CD4-positive, alpha-beta memory T cell (primary cell): ENCODE measurements at regions of chr19 and their contacts with region 1.

Region 1: GRCh38 chr19:2900296-2901252 is at the start of gene ZNF57:
- DNase-seq: peak; percentile 92 to 98 (median 97)
- H3K4me3 ChIP-seq: peak within 1 kb of the TSS; percentile 52 to 90
- H3K4me3 Mint-ChIP-seq: peak within 1 kb of the TSS; percentile 93 to 100 (median 96)
- H3K27ac ChIP-seq: peak within 1 kb of the TSS; percentile 47
- H3K27ac Mint-ChIP-seq: peak within 1 kb of the TSS; percentile 81 to 94 (median 92)
- H3K4me1 ChIP-seq: peaks cover 15% of the 10 kb centered on the region
- H3K4me1 Mint-ChIP-seq: peaks cover 15 to 29% (median 20%) of the 10 kb centered on the region in 4 donors
- H3K27me3 ChIP-seq: no peaks in the 10 kb centered on the region
- H3K27me3 Mint-ChIP-seq: no peaks in the 10 kb centered on the region
- total RNA-seq, gene ZNF57: 4.2 to 4.7 TPM

Region 2: GRCh38 chr19:2691951-2692350 is 208.6 kb before region 1 on chr19:
- CTCF ChIA-PET with region 1: no interaction called
- POLR2A ChIA-PET with region 1: no interaction called
- intact Hi-C with region 1: no loop called
- DNase-seq: no peak
- H3K4me3 ChIP-seq: no peak overlapping the region
- H3K4me3 Mint-ChIP-seq: no peak overlapping the region
- H3K27ac ChIP-seq: no peak overlapping the region
- H3K27ac Mint-ChIP-seq: no peak overlapping the region
- H3K4me1 ChIP-seq: no peaks in the 10 kb centered on the region
- H3K4me1 Mint-ChIP-seq: peaks cover 0 to 6% (median 0%) of the 10 kb centered on the region in 4 donors
- H3K27me3 ChIP-seq: no peaks in the 10 kb centered on the region
- H3K27me3 Mint-ChIP-seq: no peaks in the 10 kb centered on the region

Region 3: DNA sequence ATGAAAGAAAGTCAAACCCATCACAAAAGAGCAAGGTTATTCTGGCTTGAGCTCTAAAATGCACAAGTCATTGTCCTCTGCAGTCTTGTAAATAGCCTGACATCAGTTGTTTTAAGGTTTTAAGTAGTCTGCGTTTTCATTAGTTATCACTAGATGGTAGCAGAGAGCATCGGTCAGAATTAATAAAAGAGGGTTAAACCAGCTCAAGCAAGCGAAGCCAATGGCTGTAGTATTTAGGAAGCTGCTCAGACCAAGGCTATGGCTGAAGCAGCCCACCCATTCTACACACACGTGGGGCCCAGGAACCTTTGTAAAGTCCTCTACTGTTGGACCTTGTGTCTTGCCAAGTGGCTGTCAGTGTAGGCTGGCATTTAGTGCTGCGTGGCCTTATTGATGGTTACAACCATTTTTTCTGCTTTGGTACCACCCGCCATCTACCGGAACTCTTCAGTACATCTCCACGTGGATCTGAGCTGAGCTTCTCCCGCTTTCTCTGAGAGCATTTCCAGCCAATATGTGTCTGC is 13.1 kb before region 1 on chr19:
- CTCF ChIA-PET with region 1: interaction called, 20 read pairs
- POLR2A ChIA-PET with region 1: interaction called, 5 read pairs
- intact Hi-C with region 1: no loop called
- DNase-seq: peak in 4 of 5 donors; percentile 20 to 38 (median 27)
- H3K4me3 ChIP-seq: no peak overlapping the region
- H3K4me3 Mint-ChIP-seq: no peak overlapping the region
- H3K27ac ChIP-seq: no peak overlapping the region
- H3K27ac Mint-ChIP-seq: peak overlapping the region in 4 of 7 donors; percentile 2 to 38 (median 32)
- H3K4me1 ChIP-seq: peaks cover 4% of the 10 kb centered on the region
- H3K4me1 Mint-ChIP-seq: peaks cover 7 to 17% (median 9%) of the 10 kb centered on the region in 4 donors
- H3K27me3 ChIP-seq: no peaks in the 10 kb centered on the region
- H3K27me3 Mint-ChIP-seq: peaks cover 0 to 7% of the 10 kb centered on the region in 2 donors

Region 4: GRCh38 chr19:2944775-2945574 is 44.4 kb after region 1 on chr19 and contains the start of gene ZNF77:
- CTCF ChIA-PET with region 1: no interaction called
- POLR2A ChIA-PET with region 1: interaction called, 12 read pairs
- intact Hi-C with region 1: loop called (anchors 2 kb)
- DNase-seq: peak; percentile 98 to 99 (median 99)
- H3K4me3 ChIP-seq: peak within 1 kb of the TSS; percentile 81 to 84
- H3K4me3 Mint-ChIP-seq: peak within 1 kb of the TSS; percentile 95 to 98 (median 97)
- H3K27ac ChIP-seq: peak within 1 kb of the TSS; percentile 64
- H3K27ac Mint-ChIP-seq: peak within 1 kb of the TSS; percentile 94 to 99 (median 99)
- H3K4me1 ChIP-seq: peaks cover 27% of the 10 kb centered on the region
- H3K4me1 Mint-ChIP-seq: peaks cover 17 to 45% (median 27%) of the 10 kb centered on the region in 4 donors
- H3K27me3 ChIP-seq: no peaks in the 10 kb centered on the region
- H3K27me3 Mint-ChIP-seq: no peaks in the 10 kb centered on the region
- total RNA-seq, gene ZNF77: 5.8 to 6.4 TPM